MCF 10A (cell line): ENCODE measurements at regions of chr15 and their contacts with region 1.

Region 1: DNA sequence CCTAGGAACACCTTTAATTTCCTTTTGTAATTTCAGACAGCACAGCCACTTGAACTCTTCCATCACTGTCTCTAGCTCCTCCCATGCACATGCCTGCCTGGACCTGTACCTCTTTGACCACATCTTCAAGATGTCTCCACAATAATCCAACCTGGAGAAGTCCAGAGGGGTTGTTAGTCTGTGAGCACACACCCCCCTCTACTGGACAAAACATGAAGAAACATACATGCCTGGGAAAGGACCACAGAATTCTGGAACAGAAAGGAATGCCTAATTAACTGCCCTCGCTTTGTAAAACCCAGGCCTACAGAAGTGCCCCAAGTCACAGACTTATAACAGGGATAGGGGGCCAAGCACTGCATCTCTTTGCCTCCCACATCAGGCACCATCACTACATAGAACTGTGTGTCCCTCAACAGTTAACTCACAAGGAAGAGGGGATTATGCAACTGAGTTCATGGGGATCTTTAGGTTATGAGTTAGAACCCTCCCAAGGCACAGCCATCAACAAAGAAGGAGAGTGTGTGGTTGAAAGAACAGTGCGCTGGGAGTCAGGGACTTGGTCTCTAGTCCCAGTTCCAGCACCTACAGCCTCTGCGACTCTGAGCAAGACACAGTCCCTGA is 61.7 kb downstream of the FMN1 start:
- DNase-seq: peak; percentile 91
- H3K4me3 Mint-ChIP-seq: no peak overlapping the region
- H3K27ac Mint-ChIP-seq: no peak overlapping the region
- H3K4me1 Mint-ChIP-seq: peaks cover 12% of the 10 kb centered on the region
- H3K27me3 Mint-ChIP-seq: no peaks in the 10 kb centered on the region
- CTCF ChIP-seq: peak; percentile 80

Region 2: GRCh38 chr15:32651229-32651837 is 481.5 kb before region 1 on chr15:
- CTCF ChIA-PET with region 1: interaction called, 4 read pairs
- POLR2A ChIA-PET with region 1: no interaction called
- intact Hi-C with region 1: loop called (anchors 5 kb)
- DNase-seq: peak; percentile 70
- H3K4me3 Mint-ChIP-seq: no peak overlapping the region
- H3K27ac Mint-ChIP-seq: no peak overlapping the region
- H3K4me1 Mint-ChIP-seq: peaks cover 12% of the 10 kb centered on the region
- H3K27me3 Mint-ChIP-seq: no peaks in the 10 kb centered on the region
- CTCF ChIP-seq: peak; percentile 88

Region 3: DNA sequence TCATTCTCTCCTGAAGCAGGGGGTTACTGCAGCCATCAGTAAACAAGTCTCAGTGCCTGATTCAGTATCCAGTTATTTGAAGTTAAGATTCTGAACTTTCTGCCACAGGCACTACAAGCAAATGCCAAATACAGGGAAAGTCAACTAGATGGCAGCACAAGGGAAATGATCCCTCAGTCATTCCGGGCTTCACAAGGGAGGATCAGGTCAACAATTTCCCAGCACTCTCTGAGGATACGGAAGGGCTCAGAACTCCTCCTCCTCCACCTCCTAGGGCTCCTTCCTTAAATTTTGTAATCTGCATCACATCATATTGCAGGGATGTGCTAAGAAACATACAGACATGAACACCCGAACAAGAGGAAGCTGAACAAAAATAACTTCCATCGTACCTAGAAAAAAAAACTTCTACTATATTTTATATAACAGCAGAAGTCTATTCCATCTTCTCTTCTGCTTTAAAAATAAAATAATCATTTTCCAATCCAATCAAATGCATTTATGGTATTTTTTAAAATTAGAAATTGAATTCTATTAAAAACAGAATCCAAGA is 125.5 kb before region 1 on chr15:
- CTCF ChIA-PET with region 1: interaction called, 10 read pairs
- POLR2A ChIA-PET with region 1: no interaction called
- intact Hi-C with region 1: loop called (anchors 1 kb)
- DNase-seq: peak; percentile 46
- H3K4me3 Mint-ChIP-seq: no peak overlapping the region
- H3K27ac Mint-ChIP-seq: no peak overlapping the region
- H3K4me1 Mint-ChIP-seq: no peaks in the 10 kb centered on the region
- H3K27me3 Mint-ChIP-seq: no peaks in the 10 kb centered on the region
- CTCF ChIP-seq: no peak

Region 4: DNA sequence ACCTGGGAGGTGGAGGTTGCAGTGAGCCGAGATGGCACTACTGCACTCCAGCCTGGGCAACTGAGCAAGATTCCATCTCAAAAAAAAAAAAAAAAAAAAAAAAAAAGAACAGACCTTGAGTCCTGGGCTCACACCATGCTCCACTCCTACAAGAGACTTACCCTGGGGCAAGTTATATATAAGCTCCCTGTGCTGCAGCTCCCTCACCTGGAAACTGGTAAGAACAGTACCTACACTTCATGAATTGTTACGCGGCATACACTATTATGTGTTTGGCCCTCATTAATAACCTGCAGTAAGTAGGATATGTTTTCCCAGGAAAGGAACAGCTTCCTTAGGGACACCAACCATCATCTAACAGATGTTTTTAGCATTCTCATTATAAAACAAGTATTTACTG is 57.9 kb before region 1 on chr15:
- CTCF ChIA-PET with region 1: interaction called, 19 read pairs
- POLR2A ChIA-PET with region 1: no interaction called
- intact Hi-C with region 1: no loop called
- DNase-seq: peak; percentile 34
- H3K4me3 Mint-ChIP-seq: no peak overlapping the region
- H3K27ac Mint-ChIP-seq: no peak overlapping the region
- H3K4me1 Mint-ChIP-seq: no peaks in the 10 kb centered on the region
- H3K27me3 Mint-ChIP-seq: no peaks in the 10 kb centered on the region
- CTCF ChIP-seq: no peak

Region 5: DNA sequence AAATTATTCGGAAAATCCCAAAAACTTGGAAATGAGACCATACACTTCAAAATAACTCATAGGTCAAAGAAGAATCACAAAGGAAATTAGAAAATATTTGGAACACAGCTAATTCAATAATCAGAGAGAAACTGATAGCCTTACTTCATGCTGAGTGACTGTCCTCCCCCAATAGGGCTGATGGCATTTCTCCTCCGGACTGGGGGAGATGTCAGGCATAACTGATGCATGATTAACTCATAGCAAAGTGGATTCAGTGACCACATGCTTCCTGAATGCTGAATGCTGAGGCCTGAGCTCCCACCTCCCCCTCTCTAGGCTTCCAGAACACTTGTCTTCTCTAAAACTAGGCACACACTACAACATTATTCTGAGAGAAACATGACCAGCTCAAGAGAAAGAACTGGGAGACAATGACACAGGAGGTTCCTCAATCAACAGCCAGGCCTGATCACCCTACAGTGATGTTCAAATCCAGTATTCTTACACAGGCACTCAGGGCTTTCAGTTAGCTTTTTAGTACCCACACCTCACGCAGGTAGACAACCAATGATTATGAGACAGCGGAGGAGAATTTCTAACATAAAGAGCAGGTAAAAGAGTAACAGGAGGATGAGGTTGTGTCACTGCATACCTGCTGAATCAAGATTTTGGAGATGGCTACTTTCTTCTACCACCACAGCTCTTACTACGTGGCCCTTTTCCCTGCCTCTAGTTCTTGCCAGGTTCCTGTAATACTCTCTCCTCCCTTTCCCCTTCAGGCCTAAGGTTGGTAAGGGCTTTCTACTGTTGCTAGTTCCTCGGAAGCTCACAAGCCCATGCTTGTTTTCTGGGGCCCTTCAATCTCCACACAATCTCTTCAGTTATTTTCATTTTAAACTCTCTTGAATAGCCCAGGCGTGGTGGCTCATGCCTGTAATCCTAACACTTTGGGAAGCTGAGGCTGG is 34.5 kb before region 1 on chr15:
- CTCF ChIA-PET with region 1: interaction called, 292 read pairs
- POLR2A ChIA-PET with region 1: interaction called, 4 read pairs
- intact Hi-C with region 1: no loop called
- DNase-seq: peak; percentile 3
- H3K4me3 Mint-ChIP-seq: no peak overlapping the region
- H3K27ac Mint-ChIP-seq: no peak overlapping the region
- H3K4me1 Mint-ChIP-seq: no peaks in the 10 kb centered on the region
- H3K27me3 Mint-ChIP-seq: no peaks in the 10 kb centered on the region
- CTCF ChIP-seq: no peak

Region 6: DNA sequence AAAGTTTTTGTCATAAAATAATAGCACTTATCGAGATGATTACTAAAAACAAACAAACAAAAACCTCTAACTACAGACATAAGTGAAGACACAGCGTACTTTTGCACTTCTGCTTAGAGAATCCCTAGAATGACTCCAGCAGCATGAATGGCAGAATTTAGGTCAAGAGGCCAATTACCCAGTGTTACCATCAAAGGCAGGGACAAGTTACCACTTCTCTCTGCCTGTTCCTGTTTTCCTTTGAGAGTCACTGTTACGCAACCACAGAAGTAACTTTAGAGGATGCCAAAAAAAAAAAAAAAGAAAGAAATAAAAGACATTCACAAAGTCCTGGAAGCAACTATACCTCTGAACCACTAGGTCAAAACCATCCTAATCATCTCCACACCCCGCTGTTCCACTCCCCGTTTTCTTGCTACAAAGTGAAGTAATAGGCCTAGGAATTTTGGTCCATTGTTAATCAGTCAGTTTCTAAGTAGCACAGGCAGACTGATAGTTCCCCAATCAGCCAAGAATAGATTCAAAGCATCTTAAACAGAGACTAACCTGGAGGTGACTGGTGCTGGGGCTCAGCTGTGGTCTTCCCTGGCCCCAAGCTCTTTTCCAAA is 19.8 kb after region 1 on chr15:
- CTCF ChIA-PET with region 1: interaction called, 12 read pairs
- POLR2A ChIA-PET with region 1: interaction called, 4 read pairs
- intact Hi-C with region 1: no loop called
- DNase-seq: peak; percentile 55
- H3K4me3 Mint-ChIP-seq: no peak overlapping the region
- H3K27ac Mint-ChIP-seq: no peak overlapping the region
- H3K4me1 Mint-ChIP-seq: peaks cover 14% of the 10 kb centered on the region
- H3K27me3 Mint-ChIP-seq: no peaks in the 10 kb centered on the region
- CTCF ChIP-seq: no peak